ENCODE measurements at regions of chrX and their contacts with region 1.

Region 1: DNA sequence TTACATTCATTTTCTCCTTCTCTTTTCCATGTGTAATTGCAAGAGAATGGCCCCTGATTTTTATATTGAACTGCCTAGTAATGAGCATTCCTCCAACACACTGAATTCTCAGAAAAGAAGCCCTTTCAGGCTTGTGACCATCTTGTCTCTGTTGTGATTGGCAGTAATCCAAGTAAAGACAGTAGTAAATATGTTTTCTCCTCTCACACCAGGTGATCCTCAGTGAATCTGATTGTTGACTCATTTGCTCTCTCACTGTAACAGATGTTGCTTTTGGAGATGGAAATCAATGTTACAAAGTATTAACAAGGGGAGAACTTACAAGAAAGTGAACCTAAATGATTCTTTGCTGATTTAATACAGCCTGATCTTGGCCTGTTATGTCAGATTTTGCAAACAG is 271.0 kb downstream of the AFF2 start:
- DNase-seq: no peak
- H3K4me3 ChIP-seq: no peak overlapping the region
- H3K27ac ChIP-seq: no peak overlapping the region
- H3K4me1 ChIP-seq: no peaks in the 10 kb centered on the region
- H3K27me3 ChIP-seq: no peaks in the 10 kb centered on the region
- CTCF ChIP-seq: no peak

Region 2: DNA sequence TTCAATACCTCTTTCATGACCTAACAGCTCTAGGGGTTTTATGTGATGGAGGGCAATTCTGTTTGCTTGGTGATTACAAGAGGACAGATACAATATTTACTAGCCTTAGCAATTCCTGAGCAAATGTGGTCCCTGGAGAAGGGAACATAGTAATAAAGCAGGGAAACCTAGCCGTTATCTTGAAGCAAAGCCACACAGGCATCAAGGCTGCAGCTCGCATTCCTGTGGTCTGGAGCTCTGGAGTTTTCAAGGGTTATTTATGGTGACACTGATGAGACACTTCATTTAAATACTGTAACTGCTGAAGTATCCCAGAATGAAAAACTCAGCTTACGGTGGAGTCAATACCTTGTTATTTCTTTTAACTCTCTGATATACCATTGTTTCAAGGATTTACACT is 204.2 kb before region 1 on chrX:
- intact Hi-C with region 1: no loop called
- DNase-seq: no peak
- H3K4me3 ChIP-seq: no peak overlapping the region
- H3K27ac ChIP-seq: no peak overlapping the region
- H3K4me1 ChIP-seq: no peaks in the 10 kb centered on the region
- H3K27me3 ChIP-seq: no peaks in the 10 kb centered on the region
- CTCF ChIP-seq: no peak

Region 3: GRCh38 chrX:148632444-148632843 is 139.0 kb before region 1 on chrX:
- intact Hi-C with region 1: loop called (anchors 5 kb)
- DNase-seq: no peak
- H3K4me3 ChIP-seq: no peak overlapping the region
- H3K27ac ChIP-seq: no peak overlapping the region
- H3K4me1 ChIP-seq: no peaks in the 10 kb centered on the region
- H3K27me3 ChIP-seq: no peaks in the 10 kb centered on the region
- CTCF ChIP-seq: no peak

Region 4: GRCh38 chrX:148902581-148902980 is 131.1 kb after region 1 on chrX:
- intact Hi-C with region 1: no loop called
- DNase-seq: no peak
- H3K4me3 ChIP-seq: no peak overlapping the region
- H3K27ac ChIP-seq: no peak overlapping the region
- H3K4me1 ChIP-seq: no peaks in the 10 kb centered on the region
- H3K27me3 ChIP-seq: no peaks in the 10 kb centered on the region
- CTCF ChIP-seq: no peak